AG04450 (cell line): ENCODE measurements at regions of chr1 and their contacts with region 1.

Region 1: GRCh38 chr1:212814537-212815334 is 23.0 kb downstream of the TATDN3 start:
- DNase-seq: no peak
- H3K4me3 ChIP-seq: no peak overlapping the region
- H3K27ac ChIP-seq: no peak overlapping the region
- H3K27me3 ChIP-seq: no peaks in the 10 kb centered on the region
- CTCF ChIP-seq: 0 out of 2 replicates have a peak, but pooled peaks have one; percentile 28

Region 2: DNA sequence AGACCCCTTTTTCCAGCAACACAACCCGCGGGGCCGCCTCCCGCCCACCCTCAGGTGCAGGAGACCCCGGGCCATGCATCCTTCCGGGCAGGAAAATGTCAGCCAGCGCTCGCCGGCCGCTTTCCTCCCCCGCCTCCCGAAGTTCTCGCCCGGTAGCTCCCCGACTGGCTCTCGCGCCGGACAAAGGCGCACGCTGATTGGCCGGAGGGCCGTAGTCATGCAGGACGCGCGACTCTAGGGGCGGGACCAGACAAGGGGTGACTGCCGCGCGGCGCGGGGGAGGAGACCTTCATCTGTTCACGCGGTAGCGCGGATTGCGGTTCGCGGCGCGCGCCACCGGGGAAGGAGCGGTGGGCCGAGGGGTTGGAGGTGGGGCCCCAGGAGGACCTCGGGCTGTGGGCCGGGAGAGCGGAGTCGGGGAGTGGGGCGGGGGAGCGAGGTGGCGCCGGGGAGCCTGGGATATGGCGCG is 43.3 kb after region 1 on chr1 and contains the start of gene FLVCR1:
- CTCF ChIA-PET with region 1: interaction called, 11 read pairs
- POLR2A ChIA-PET with region 1: interaction called, 7 read pairs
- DNase-seq: peak; percentile 85
- H3K4me3 ChIP-seq: peak within 1 kb of the TSS; percentile 81
- H3K27ac ChIP-seq: peak within 1 kb of the TSS; percentile 83
- H3K27me3 ChIP-seq: no peaks in the 10 kb centered on the region
- CTCF ChIP-seq: no peak
- polyA plus RNA-seq, gene FLVCR1: 2.0 and 2.3 TPM in 2 replicates

Region 3: DNA sequence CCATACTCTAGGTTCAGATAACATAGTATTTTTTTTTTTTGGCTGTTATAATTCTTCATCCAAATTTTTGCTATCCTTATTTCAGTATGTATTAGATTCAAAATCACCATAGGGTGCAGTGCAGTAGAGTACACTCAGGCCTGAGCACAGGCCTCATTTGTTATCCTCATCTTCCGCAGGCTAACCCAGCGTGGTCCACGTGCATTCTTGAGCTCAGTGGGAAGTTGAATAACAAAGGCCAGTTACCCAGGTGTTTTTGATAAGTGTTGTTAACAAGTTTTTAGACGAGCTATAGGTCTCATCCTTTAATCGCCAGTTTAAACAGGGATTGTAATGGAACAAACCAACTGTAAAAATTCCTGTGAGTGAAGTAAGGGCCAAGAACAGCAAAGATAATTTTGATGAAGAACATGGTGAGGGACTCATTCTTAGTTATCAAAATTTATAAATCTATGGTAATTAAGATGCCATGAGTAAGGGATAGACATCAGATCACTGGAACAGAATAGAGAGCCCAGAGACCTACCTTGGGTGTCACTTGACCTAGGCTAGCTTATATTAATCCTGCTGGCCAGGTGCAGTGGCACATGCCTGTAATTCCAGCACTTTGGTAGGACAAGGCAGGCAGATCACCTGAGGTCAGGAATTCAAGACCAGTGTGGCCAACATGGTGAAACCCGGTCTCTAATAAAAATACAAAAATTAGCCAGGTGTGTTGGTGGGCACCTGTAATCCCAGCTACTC is 65.4 kb after region 1 on chr1:
- CTCF ChIA-PET with region 1: no interaction called
- POLR2A ChIA-PET with region 1: no interaction called
- DNase-seq: no peak
- H3K4me3 ChIP-seq: no peak overlapping the region
- H3K27ac ChIP-seq: no peak overlapping the region
- H3K27me3 ChIP-seq: no peaks in the 10 kb centered on the region
- CTCF ChIP-seq: no peak

Region 4: GRCh38 chr1:212928323-212929291 is 113.9 kb after region 1 on chr1:
- CTCF ChIA-PET with region 1: no interaction called
- POLR2A ChIA-PET with region 1: no interaction called
- DNase-seq: no peak
- H3K4me3 ChIP-seq: no peak overlapping the region
- H3K27ac ChIP-seq: no peak overlapping the region
- H3K27me3 ChIP-seq: no peaks in the 10 kb centered on the region
- CTCF ChIP-seq: no peak